ENCODE measurements at regions of chr3 and their contacts with region 1.

Region 1: DNA sequence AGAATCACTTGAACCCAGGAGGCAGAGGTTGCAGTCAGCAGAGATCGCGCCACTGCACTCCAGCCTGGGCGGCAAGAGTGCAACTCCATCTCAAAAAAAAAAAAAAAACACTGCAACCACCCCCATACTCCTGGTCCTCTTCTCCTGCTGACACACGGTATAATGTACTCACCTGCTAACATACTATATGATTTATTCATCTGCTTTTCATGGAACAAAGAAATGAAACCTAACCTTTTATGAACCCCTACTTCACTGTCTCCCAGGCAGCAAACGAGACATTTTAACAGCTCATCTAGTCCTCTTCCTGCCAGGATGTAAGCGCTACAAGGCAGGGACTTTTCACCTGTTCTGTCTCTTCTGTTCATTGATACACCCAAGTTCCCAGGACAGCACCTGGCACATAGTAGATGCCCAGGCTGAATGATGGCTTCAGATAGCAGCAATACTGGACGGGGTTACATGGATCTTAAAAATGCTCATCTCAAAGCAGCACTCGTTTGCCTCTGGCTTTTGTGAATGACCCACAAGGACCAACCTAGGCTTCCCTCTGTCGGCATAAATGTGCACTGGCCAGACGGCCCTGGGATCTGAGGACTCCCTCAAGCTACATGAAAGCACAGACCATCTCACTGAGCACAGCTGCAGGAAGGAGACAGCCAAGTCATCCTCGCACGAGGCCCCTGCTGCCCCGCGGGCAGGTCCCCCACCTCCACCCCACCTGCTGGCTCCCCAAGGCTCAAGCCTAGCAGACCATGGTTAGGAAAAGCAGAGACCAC is 20.3 kb downstream of the XXYLT1 start:
- DNase-seq: no peak
- H3K27ac ChIP-seq: no peak overlapping the region
- CTCF ChIP-seq: no peak

Region 2: DNA sequence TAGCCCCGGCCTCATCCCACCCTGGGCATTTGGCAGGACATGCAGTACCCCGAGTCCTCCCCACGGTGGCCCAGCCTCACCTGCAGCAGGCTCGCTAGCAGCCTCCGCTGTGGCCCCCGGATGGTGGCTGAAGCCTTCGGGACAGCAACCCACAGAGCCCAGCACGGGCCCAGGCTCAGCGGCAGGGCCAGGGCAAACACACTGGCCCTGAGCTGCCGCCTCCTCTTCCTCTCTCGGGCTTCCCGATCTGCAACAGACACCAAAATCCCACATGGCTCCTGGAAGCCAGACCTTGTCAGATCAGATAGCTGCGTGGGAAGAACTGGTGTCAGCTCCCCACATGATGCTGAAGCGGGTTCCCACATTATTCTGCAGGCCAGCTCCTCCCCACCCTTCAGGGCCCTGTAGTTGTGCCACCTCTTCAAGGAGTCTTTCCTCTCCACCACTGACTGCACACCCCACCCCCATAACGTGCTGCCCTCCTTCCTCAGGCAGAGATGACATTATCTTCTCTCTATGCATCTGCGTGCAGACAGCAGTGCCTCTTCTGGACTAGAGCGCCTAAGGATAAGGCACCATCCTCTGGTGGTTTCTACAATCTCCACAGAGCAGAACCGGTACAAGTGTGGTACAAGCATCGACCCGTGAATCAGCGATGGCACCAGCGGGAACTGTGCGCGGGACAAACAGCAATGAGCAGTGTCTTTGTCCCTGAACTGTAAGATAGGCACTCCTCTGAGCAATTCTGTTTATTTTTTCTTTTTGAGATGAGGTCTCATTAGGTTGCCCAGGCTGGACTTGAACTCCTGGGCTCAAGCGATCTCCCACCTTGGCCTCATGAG is 627.0 kb before region 1 on chr3:
- CTCF ChIA-PET with region 1: no interaction called
- POLR2A ChIA-PET with region 1: interaction called, 14 read pairs
- DNase-seq: no peak
- H3K27ac ChIP-seq: no peak overlapping the region
- CTCF ChIP-seq: no peak

Region 3: GRCh38 chr3:195226900-195227447 is 23.7 kb before region 1 on chr3:
- CTCF ChIA-PET with region 1: no interaction called
- POLR2A ChIA-PET with region 1: no interaction called
- DNase-seq: no peak
- H3K27ac ChIP-seq: no peak overlapping the region
- CTCF ChIP-seq: no peak

Region 4: GRCh38 chr3:195263925-195264600 is 13.4 kb after region 1 on chr3:
- CTCF ChIA-PET with region 1: no interaction called
- POLR2A ChIA-PET with region 1: interaction called, 10 read pairs
- DNase-seq: no peak
- H3K27ac ChIP-seq: peak overlapping the region; percentile 15; the same call in 1 of the 2 replicates
- CTCF ChIP-seq: no peak